Activated CD4-positive, alpha-beta T cell treated with anti-CD3 and anti-CD28 coated beads, Interleukin-2, amount 10 ng/mL, durations not matched to agents 24 days and 14 days (primary cell): ENCODE measurements at regions of chrX and their contacts with region 1.

Region 1: GRCh38 chrX:71283403-71284143 is at the start of gene NONO:
- DNase-seq: peak; percentile 96
- H3K4me3 Mint-ChIP-seq: peak within 1 kb of the TSS; percentile 97
- H3K27ac Mint-ChIP-seq: peak within 1 kb of the TSS; percentile 99
- H3K4me1 Mint-ChIP-seq: peaks cover 13% of the 10 kb centered on the region
- H3K27me3 Mint-ChIP-seq: peaks cover 5% of the 10 kb centered on the region
- total RNA-seq, gene NONO: 580 and 605 TPM in 2 replicates

Region 2: GRCh38 chrX:71068049-71068763 is 215.4 kb before region 1 on chrX and contains the start of gene SNX12:
- intact Hi-C with region 1: loop called (anchors 2 kb)
- DNase-seq: peak; percentile 95
- H3K4me3 Mint-ChIP-seq: peak within 1 kb of the TSS; percentile 99
- H3K27ac Mint-ChIP-seq: peak within 1 kb of the TSS; percentile 96
- H3K4me1 Mint-ChIP-seq: peaks cover 19% of the 10 kb centered on the region
- H3K27me3 Mint-ChIP-seq: peaks cover 8% of the 10 kb centered on the region
- total RNA-seq, gene SNX12: 56.0 and 57.1 TPM in 2 replicates

Region 3: DNA sequence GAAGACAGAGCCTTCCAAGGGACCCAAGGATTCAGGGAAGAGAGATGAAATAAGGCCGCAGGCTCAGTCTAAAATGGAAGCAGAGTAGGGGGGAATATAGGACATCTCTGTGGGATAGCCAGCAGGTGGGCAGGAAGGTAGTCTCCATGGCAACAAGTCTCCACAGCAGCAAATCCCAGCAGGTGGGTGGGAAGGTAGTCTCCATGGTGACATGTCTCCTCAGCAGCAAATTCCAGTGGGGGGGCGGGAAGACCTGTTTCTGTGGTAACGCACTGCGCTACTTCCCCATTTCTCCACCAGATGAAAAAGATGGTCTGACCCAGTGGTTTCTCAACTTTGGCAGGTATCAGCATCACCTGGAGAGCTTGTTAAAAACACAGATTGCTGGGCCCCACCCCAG is 120.6 kb before region 1 on chrX:
- intact Hi-C with region 1: no loop called
- DNase-seq: no peak
- H3K4me3 Mint-ChIP-seq: no peak overlapping the region
- H3K27ac Mint-ChIP-seq: no peak overlapping the region
- H3K4me1 Mint-ChIP-seq: peaks cover 1% of the 10 kb centered on the region
- H3K27me3 Mint-ChIP-seq: no peaks in the 10 kb centered on the region

Region 4: DNA sequence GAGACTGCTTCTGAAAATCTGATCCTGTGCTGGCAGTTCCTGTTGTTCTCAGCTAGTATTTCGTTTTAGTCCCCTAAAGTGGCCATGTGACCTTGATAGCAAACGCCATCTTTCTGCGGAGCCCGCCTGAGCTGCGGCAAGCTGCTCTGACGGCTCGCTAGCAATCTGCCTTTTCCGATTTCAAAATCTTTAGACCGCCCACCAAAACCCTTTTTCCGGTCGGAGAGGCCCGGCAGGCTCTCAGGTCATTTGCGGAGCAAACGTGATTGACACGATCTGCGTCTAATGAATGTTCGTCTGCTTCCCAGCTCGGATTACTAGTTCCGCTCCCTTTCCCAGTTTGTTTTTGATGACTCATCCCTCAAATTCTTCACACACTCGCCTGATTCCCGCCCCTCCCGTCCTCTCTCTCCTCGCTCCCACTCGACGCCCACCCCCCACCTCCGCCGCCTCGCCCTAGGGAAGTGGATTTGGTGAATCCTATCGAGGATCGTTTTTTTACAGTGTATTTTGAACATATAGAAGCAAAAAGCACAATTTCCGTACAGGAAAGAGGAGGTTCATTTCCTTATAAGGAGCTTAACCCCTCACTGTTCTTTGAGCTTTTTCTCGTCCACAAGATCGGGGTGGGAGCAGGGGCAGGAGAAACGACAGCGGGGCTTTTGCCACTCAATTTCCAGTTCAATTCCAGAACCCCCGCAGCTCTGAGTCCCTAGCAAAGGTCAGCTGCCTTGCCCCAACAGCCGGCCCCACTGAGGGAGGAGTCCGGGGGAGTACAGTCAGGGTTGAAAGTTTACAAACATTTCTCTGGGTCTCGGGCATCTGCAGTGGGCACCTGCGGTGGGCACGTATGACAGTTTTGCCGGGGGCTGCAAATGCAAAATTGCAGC is 101.4 kb before region 1 on chrX:
- intact Hi-C with region 1: loop called (anchors 1 kb)
- DNase-seq: peak; percentile 95
- H3K4me3 Mint-ChIP-seq: peak overlapping the region; percentile 88
- H3K27ac Mint-ChIP-seq: peak overlapping the region; percentile 97
- H3K4me1 Mint-ChIP-seq: peaks cover 18% of the 10 kb centered on the region
- H3K27me3 Mint-ChIP-seq: no peaks in the 10 kb centered on the region

Region 5: DNA sequence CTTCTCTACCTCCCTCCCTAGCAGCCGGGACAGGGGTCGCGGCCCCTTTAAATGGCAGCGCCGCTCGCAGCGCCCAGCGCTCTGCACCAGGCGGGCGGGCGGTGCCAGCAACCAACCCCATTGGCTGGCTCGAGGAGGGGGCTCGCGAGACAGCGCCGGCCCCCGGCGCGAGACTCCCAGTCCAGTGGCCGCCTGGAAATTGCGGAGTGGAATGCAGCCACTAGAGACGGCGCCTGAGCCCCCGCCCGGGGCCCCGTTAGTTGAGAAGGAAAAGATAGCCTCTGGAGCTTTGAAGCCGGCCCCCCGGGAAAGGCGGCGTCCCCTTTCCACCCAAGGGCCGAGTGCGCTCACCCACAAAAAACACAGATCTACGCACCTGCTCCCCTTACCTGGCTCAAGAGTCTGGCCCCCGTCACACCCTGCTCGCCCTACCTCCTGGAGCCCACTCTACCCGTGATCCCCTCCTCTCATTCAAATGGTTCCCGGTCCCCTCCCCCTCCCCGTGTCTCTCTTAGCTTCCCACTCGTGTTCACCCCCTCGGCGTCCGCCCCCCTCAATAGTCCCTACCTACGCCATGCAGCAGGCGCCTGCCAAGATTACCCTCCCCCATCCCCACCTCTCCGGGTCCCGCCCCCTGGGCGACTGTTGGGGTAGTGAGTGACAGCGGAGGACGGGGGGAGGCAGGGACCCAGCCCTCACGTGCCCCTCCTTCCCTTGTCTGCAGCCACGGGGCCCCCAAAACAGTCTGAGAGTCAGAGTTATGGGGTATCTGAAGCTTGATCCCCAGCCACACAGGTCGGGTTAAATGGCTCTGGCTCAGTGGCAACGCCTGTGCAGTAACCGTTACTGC is 29.3 kb before region 1 on chrX and contains the start of gene ZMYM3:
- intact Hi-C with region 1: loop called (anchors 1 kb)
- DNase-seq: peak; percentile 92
- H3K4me3 Mint-ChIP-seq: peak within 1 kb of the TSS; percentile 93
- H3K27ac Mint-ChIP-seq: peak within 1 kb of the TSS; percentile 88
- H3K4me1 Mint-ChIP-seq: peaks cover 28% of the 10 kb centered on the region
- H3K27me3 Mint-ChIP-seq: peaks cover 2% of the 10 kb centered on the region
- total RNA-seq, gene ZMYM3: 16.9 and 20.1 TPM in 2 replicates

Region 6: DNA sequence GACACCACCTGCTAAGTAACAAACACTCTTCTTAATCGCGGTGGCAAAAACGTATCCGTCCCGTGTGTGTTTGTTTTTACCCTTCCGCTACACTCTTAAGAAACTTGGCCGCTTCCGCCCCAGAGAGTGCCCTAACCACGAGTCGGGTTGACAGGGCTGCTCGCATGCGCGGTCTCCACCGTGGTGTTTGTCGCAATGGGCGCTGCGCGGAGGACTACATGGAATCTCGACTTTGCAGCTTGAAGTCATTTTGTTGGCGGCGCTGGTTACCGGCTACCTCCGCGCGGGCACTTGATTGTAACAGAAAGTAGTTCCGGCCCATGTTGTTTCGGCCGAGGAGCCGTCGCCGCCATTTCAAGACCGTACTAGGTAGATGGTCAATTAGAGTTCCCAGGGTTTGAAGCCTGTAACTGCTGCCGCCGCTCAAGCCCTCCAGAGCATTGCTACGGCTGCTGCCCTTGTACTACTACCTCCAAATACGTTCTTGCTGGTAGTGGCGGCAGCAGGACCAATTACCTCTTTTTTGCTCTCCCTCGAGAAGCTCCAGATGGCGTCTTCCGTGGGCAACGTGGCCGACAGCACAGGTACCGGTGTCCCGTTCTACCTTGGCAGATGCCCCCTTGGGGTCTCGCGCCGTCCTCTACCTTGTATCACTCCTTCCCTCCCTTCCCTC is 249.3 kb after region 1 on chrX and contains the start of gene OGT:
- intact Hi-C with region 1: loop called (anchors 1 kb)
- DNase-seq: peak; percentile 97
- H3K4me3 Mint-ChIP-seq: peak within 1 kb of the TSS; percentile 100
- H3K27ac Mint-ChIP-seq: peak within 1 kb of the TSS; percentile 99
- H3K4me1 Mint-ChIP-seq: peaks cover 16% of the 10 kb centered on the region
- H3K27me3 Mint-ChIP-seq: no peaks in the 10 kb centered on the region
- total RNA-seq, gene OGT: 284 and 301 TPM in 2 replicates